ENCODE measurements at regions of chr10 and their contacts with region 1.

Region 1: GRCh38 chr10:133438711-133439273 is 14.4 kb upstream of the SPRN start:
- DNase-seq: peak; percentile 41
- H3K4me3 Mint-ChIP-seq: no peak overlapping the region
- H3K27ac Mint-ChIP-seq: no peak overlapping the region
- H3K4me1 Mint-ChIP-seq: peaks cover 41% of the 10 kb centered on the region
- H3K27me3 Mint-ChIP-seq: peaks cover 6% of the 10 kb centered on the region

Region 2: DNA sequence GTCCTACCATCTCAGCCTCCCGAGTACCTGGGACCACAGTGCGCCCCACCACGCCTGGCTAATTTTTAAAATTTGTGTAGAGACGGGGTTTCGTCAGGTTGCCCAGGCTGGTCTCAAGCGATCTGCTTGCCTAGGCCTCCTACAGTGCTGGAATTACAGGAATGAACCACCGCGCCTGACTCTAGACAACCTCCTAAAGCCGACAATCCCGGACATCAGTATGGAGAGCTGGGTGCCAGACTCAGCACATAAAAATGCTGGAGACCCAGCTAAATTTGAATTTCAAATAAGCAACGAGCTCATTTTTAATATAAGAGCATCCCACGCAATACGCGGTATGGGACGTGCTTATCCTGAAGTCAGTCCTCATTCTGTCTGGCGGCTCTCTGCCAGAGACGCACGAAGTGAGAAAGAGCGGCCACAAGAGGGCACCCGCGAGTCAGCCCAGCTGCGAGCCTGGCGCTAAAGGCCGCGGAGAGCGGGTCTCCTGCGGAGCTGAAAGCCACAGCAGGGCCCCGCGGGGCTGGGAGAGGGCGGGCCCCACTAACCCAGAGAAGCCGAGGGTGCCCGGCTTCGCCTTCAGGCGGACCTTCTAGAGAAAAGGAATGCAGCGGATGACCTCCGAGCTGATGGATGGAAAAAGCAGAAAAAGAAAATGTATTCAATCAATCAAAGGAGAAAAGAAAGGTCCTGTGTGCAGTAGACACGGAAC is 109.1 kb before region 1 on chr10:
- CTCF ChIA-PET with region 1: interaction called, 18 read pairs
- POLR2A ChIA-PET with region 1: no interaction called
- DNase-seq: peak; percentile 85
- H3K4me3 Mint-ChIP-seq: no peak overlapping the region
- H3K27ac Mint-ChIP-seq: no peak overlapping the region
- H3K4me1 Mint-ChIP-seq: peaks cover 11% of the 10 kb centered on the region
- H3K27me3 Mint-ChIP-seq: peaks cover 68% of the 10 kb centered on the region

Region 3: DNA sequence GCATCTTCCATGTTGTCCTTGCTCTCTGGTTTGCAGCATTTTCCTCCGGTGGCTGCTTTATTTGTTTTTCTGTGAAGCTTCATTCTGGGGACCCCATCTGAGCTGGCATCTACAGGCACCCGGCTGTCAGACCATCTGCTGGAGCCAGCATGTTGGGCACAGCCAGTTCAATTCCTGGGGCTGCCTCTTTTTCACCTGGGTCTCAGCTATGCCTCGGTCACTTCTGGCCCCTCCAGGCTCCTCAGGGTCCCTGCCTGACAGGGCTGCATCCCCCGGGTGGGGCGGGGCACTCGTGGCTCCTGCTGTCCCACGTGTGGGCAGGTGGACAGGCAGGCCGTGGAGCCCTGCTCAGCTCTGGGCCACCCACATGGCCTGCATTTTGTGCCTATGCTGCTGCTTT is 23.0 kb after region 1 on chr10:
- CTCF ChIA-PET with region 1: interaction called, 12 read pairs
- POLR2A ChIA-PET with region 1: no interaction called
- DNase-seq: no peak
- H3K4me3 Mint-ChIP-seq: no peak overlapping the region
- H3K27ac Mint-ChIP-seq: no peak overlapping the region
- H3K4me1 Mint-ChIP-seq: peaks cover 4% of the 10 kb centered on the region
- H3K27me3 Mint-ChIP-seq: no peaks in the 10 kb centered on the region

Region 4: DNA sequence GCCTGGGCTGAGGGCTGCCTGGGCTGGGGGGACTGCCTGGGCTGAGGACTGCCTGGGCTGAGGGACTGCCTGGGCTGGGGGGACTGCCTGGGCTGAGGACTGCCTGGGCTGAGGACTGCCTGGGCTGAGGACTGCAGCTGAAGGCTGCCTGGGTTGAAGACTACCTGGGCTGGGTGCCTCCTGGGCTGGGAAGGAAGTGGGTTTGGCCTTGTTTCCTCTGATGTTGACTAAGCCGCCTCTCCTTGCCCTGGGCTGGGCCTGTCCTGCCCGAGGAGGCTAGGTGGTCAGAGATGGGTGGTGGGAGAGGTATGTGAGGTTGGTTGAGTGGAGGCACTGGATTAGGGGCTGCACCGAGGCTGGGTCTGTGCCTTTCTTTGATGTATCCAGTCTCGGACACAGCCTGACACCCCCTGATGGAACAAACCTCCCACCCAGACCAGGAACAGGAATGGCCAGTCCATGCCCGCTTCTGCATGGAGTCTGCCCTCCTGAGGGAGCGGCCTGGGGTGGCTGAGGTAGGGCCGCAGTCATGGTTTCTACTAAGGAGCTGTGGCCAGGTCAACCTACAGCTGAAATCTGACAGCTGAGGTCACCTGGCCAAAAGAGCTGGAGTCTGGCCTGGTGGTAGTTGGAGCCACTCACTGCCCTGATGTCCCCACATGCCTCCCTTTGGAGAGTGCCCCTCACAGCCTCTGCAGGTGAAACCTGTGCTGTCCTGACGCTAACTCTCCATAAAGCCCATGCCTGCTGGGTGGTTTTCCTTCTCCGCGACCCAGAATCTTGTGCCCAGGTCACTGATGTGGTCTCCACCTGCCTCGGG is 37.2 kb after region 1 on chr10:
- CTCF ChIA-PET with region 1: interaction called, 11 read pairs
- POLR2A ChIA-PET with region 1: interaction called, 6 read pairs
- DNase-seq: peak; percentile 68
- H3K4me3 Mint-ChIP-seq: peak overlapping the region; percentile 43
- H3K27ac Mint-ChIP-seq: peak overlapping the region; percentile 82
- H3K4me1 Mint-ChIP-seq: peaks cover 36% of the 10 kb centered on the region
- H3K27me3 Mint-ChIP-seq: peaks cover 4% of the 10 kb centered on the region

Region 5: GRCh38 chr10:133489816-133490588 is 51.2 kb after region 1 on chr10:
- CTCF ChIA-PET with region 1: interaction called, 18 read pairs
- POLR2A ChIA-PET with region 1: interaction called, 3 read pairs
- DNase-seq: no peak
- H3K4me3 Mint-ChIP-seq: no peak overlapping the region
- H3K27ac Mint-ChIP-seq: no peak overlapping the region
- H3K4me1 Mint-ChIP-seq: peaks cover 4% of the 10 kb centered on the region
- H3K27me3 Mint-ChIP-seq: peaks cover 19% of the 10 kb centered on the region

Region 6: DNA sequence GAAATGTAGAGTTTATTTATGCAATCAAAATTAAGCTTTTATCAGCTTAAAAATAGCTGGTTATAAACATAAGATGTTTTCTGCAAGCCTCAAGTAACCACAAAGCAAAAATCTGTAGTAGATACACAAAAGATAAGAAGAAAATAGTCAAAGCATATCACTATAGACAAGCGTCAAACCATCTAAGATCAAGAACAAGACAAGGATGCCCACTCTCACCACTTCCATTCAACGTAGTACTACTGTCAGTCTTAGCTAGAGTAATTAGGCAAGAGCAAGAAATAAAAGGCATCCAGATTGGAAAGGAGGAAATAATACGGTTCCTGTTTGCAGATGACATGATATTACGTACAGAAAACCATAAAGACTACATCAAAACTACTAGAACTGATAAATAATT is 70.9 kb after region 1 on chr10:
- CTCF ChIA-PET with region 1: interaction called, 15 read pairs
- POLR2A ChIA-PET with region 1: no interaction called
- DNase-seq: no peak
- H3K4me3 Mint-ChIP-seq: no peak overlapping the region
- H3K27ac Mint-ChIP-seq: no peak overlapping the region
- H3K4me1 Mint-ChIP-seq: no peaks in the 10 kb centered on the region
- H3K27me3 Mint-ChIP-seq: peaks cover 49% of the 10 kb centered on the region

Region 7: DNA sequence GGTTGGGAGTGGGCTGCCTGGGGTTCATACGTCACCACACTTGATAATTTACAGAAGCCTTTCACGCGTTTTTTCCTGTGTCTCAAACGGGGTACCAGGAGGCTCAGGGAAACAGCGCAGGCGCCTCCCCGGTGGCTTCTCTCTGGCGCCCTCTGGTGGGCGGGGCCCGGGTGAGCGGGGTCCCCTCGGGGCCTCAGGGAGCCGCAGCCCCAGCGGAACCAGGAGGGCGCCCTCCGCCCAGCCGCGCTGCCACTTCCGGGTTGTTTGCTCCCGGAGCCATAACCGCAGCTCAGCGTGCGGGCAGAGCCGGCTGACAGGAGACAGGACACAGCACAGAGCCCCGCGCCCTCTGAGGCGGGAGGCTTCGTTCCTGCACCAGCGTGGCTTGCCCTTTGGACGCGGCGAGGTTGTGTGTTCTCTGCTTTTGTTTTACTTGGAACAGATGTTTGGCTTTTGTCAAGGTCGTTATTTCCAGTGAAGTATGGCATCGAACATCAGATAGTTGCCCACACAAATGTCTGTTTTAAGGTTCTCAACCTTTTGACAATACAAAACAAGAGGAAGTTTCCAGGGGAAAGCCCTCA is 81.5 kb after region 1 on chr10:
- CTCF ChIA-PET with region 1: interaction called, 29 read pairs
- POLR2A ChIA-PET with region 1: no interaction called
- DNase-seq: peak; percentile 91
- H3K4me3 Mint-ChIP-seq: peak overlapping the region; percentile 39
- H3K27ac Mint-ChIP-seq: no peak overlapping the region
- H3K4me1 Mint-ChIP-seq: peaks cover 15% of the 10 kb centered on the region
- H3K27me3 Mint-ChIP-seq: peaks cover 41% of the 10 kb centered on the region